ENCODE measurements at regions of chr19 and their contacts with region 1.

Region 1: GRCh38 chr19:29841559-29842367 is 30.0 kb downstream of the CCNE1 start:
- DNase-seq: no peak

Region 2: GRCh38 chr19:29811125-29812079 is 30.4 kb before region 1 on chr19 and contains the start of gene CCNE1:
- intact Hi-C with region 1: loop called (anchors 2 kb)
- DNase-seq: peak; percentile 96
- total RNA-seq, gene CCNE1: 1.9 TPM

Region 3: GRCh38 chr19:29953352-29954247 is 111.8 kb after region 1 on chr19:
- intact Hi-C with region 1: no loop called
- DNase-seq: no peak

Measured in cardiac septum (tissue), 1 donor.